Dendritic cell treated with granulocyte-macrophage colony-stimulating factor and Interleukin-4, amounts not matched to agents 40 ng/mL and 50 ng/mL, for 4 days (primary cell): ENCODE measurements at regions of chr7 and their contacts with region 1.

Region 1: DNA sequence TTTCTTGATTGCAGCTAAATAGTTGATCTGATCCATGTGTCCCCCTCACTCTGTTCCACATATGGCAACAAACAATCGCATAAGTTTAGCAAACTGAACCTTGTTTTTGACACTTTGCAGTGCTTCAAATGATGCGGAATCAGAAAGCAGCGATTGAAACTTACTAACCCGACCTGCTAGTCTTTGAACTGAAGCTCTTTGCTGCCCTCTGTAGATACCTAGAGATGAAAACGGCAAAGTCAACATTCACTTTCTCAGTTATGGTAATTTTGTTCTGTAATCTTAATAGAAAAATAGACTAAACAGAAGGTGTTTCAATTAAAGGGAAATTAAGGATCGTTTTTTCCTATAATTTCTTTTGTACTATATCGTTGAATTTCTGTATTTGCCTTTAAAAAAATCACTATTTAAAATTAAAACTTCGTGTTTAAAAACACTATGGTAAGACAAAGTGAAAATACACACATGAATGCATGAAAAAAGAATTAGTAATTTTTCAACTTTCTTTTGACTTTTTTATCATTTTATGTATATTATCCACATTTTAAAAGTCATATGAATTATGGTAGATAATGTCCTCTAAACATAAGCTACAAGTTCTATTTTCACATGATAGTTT is 276.5 kb downstream of the MAGI2 start:
- H3K4me3 Mint-ChIP-seq: no peak overlapping the region
- H3K27ac Mint-ChIP-seq: no peak overlapping the region
- H3K4me1 Mint-ChIP-seq: no peaks in the 10 kb centered on the region
- H3K27me3 Mint-ChIP-seq: no peaks in the 10 kb centered on the region

Region 2: GRCh38 chr7:78510580-78511188 is 666.3 kb before region 1 on chr7:
- intact Hi-C with region 1: loop called (anchors 2 kb)
- H3K4me3 Mint-ChIP-seq: no peak overlapping the region
- H3K27ac Mint-ChIP-seq: no peak overlapping the region
- H3K4me1 Mint-ChIP-seq: no peaks in the 10 kb centered on the region
- H3K27me3 Mint-ChIP-seq: no peaks in the 10 kb centered on the region

Region 3: GRCh38 chr7:79137942-79138341 is 39.0 kb before region 1 on chr7:
- intact Hi-C with region 1: no loop called
- H3K4me3 Mint-ChIP-seq: no peak overlapping the region
- H3K27ac Mint-ChIP-seq: no peak overlapping the region
- H3K4me1 Mint-ChIP-seq: no peaks in the 10 kb centered on the region
- H3K27me3 Mint-ChIP-seq: no peaks in the 10 kb centered on the region

Region 4: GRCh38 chr7:79199266-79199665 is 22.3 kb after region 1 on chr7:
- intact Hi-C with region 1: no loop called
- H3K4me3 Mint-ChIP-seq: no peak overlapping the region
- H3K27ac Mint-ChIP-seq: no peak overlapping the region
- H3K4me1 Mint-ChIP-seq: no peaks in the 10 kb centered on the region
- H3K27me3 Mint-ChIP-seq: no peaks in the 10 kb centered on the region

Region 5: GRCh38 chr7:79471699-79472098 is 294.7 kb after region 1 on chr7:
- intact Hi-C with region 1: no loop called
- H3K4me3 Mint-ChIP-seq: no peak overlapping the region
- H3K27ac Mint-ChIP-seq: no peak overlapping the region
- H3K4me1 Mint-ChIP-seq: no peaks in the 10 kb centered on the region
- H3K27me3 Mint-ChIP-seq: no peaks in the 10 kb centered on the region